ENCODE measurements at regions of chr18 and their contacts with region 1.

Region 1: DNA sequence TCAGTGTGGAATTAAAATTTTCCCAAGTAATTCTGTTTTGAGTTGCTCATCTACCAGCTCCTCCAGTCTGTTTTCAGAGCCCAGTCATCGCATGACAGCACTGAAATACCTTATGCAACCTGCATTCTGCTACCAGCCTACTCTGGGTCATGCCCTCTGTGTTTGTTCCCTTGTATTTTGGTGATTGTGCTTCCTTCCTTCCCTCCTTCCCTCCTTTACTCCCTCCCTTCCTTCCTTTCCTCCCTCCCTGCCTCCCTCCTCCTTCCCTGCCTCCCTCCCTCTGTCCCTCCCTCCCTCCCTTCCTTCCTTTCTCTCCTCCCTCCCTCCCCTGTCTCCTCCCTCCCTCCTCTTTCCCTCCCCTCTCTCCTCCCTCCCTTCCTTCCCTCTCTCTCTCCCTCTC is 289.6 kb downstream of the CDH2 start:
- DNase-seq: no peak
- H3K4me3 ChIP-seq: no peak overlapping the region
- H3K27ac ChIP-seq: no peak overlapping the region
- H3K4me1 ChIP-seq: no peaks in the 10 kb centered on the region
- H3K27me3 ChIP-seq: no peaks in the 10 kb centered on the region
- CTCF ChIP-seq: no peak
- POLR2A ChIP-seq: no peak

Region 2: GRCh38 chr18:27942701-27943100 is 55.4 kb after region 1 on chr18:
- intact Hi-C with region 1: loop called (anchors 10 kb)
- DNase-seq: no peak
- H3K4me3 ChIP-seq: no peak overlapping the region
- H3K27ac ChIP-seq: no peak overlapping the region
- H3K4me1 ChIP-seq: no peaks in the 10 kb centered on the region
- H3K27me3 ChIP-seq: no peaks in the 10 kb centered on the region
- CTCF ChIP-seq: no peak
- POLR2A ChIP-seq: no peak

Measured in thyroid gland (tissue), 4 donors.